Right cardiac atrium (tissue), 5 donors: ENCODE measurements at regions of chr17 and their contacts with region 1.

Region 1: DNA sequence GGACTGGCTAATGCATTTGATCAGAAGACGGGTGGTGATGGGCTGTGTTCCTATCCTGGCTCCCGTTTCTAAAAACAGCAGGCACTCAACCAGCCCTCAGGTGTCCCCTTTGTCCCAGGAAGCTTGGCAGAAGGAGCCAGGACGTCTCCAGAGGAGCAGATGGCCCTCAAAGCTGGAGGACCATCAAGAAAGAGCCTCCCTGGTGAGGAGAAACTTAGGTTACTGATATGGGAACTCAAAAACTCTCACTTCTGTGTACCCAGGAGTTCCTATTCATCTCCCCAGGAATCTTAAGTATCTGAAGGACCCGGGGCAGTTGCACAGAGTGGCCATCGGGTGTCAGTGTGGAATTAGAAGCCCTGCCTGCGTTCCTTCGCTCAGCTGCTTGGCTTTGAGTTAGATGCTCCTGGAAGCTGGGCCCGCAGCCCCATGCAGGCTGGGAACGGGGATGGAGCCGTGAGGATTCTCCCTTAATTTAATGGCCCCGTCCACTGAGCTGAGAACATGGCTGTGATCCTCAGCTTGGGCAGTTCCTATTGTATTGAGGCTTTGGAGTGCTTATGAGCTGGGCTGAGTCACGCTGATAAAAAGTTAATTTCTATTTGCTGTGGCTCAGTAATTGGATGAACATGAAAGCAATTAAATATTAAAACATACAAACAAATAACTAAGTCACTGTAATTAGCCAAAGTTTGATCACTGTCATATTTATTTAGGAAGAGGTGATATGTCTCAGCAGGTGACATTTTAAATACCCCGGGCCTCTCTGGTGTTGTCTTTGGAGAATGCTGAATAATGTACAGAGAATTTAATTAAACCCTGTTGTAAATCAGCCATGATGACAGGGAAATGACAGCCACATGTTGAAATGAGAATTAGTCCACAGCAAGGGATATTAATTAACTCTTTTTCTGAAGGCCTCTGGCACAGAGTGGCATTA is 402.1 kb downstream of the SEC14L1 start:
- DNase-seq: peak; percentile 82 to 90 (median 88)
- ATAC-seq: peak; percentile 92 to 93
- H3K4me3 ChIP-seq: no peak overlapping the region
- H3K27ac ChIP-seq: peak overlapping the region; percentile 92
- H3K4me1 ChIP-seq: peaks cover 4% of the 10 kb centered on the region
- H3K27me3 ChIP-seq: no peaks in the 10 kb centered on the region

Region 2: DNA sequence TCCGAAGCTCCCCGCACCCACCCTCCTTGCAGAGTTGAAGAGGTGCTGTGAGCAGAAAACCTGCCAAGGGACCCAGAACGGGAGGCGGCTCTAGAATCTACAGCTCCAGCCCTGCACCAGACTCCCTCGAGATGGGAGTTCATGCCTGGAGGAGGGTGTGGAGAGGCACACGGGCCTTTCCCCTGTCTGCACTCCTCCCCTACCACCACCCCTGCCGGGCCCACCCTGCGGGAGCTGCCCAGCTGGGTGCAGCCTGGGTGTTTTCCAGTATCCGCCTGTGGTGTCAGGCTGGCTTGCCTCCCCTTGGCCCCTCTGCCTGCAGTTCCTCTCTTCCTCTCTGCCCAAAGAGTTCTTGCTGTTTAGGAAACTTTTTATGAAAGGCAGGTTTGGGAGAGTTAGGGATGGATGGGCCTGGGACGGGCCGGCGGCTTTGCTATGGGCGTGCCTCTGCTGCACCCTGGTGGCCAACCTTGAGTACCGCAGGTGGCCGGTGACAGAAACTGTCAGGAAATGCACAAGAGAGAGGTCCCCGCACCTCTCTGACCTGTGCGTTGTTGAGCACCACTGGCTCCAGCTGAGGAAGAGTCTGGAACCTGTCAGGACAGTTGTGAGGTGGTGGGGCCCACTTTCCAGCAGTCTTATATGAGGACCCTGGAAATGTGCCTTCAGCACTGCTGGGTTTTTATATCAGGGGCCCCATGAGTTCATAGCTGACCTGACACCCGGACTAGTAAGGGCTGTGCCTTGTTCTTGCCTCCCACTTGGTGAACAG is 48.0 kb before region 1 on chr17:
- intact Hi-C with region 1: no loop called
- DNase-seq: peak; percentile 70 to 92 (median 90)
- ATAC-seq: peak; percentile 46 to 62
- H3K4me3 ChIP-seq: no peak overlapping the region
- H3K27ac ChIP-seq: no peak overlapping the region
- H3K4me1 ChIP-seq: peaks cover 5% of the 10 kb centered on the region
- H3K27me3 ChIP-seq: no peaks in the 10 kb centered on the region

Region 3: DNA sequence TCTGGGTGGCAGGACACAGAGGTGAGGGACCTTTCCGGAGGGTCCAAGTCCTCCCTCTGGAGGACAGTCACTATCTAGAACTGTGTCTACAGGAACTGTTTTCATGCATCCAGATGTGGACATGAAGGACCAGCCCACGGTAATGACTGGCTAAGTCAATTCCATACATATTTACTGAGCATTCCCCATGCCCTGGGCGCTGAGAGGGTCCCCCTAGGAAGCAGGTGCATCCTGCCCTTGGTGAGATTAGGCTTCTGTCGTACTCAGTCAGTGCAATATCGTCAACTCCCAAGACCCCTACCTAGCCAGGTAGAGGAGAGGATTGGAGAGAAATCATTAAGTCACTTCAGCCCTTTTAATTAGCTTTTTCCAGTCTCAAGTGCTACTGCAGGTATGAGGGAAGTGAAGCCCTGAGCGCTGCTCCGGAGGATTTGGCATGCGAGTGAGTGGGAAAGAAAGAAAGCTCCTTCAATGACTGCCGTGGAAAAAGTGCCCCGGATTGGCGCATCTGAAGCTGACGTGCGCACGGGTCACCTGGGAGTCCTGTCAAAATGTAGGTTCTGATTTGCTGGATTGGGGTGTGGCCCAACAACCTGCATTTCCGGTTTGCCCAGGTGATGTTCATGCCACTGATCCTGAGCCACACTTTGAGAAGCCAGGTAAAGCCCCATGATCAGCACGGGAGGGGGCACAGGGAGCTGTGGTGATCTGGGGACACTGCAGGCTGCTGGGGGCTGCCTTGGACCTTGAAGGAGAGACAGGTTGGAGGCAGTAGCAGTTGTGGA is 48.3 kb after region 1 on chr17:
- intact Hi-C with region 1: no loop called
- DNase-seq: no peak
- ATAC-seq: no peak
- H3K4me3 ChIP-seq: no peak overlapping the region
- H3K27ac ChIP-seq: no peak overlapping the region
- H3K4me1 ChIP-seq: no peaks in the 10 kb centered on the region
- H3K27me3 ChIP-seq: no peaks in the 10 kb centered on the region

Region 4: GRCh38 chr17:77609553-77610517 is 67.0 kb after region 1 on chr17:
- intact Hi-C with region 1: loop called in 1 of 4 experiments (anchors 10 kb)
- DNase-seq: no peak
- ATAC-seq: no peak
- H3K4me3 ChIP-seq: no peak overlapping the region
- H3K27ac ChIP-seq: no peak overlapping the region
- H3K4me1 ChIP-seq: no peaks in the 10 kb centered on the region
- H3K27me3 ChIP-seq: no peaks in the 10 kb centered on the region

Region 5: DNA sequence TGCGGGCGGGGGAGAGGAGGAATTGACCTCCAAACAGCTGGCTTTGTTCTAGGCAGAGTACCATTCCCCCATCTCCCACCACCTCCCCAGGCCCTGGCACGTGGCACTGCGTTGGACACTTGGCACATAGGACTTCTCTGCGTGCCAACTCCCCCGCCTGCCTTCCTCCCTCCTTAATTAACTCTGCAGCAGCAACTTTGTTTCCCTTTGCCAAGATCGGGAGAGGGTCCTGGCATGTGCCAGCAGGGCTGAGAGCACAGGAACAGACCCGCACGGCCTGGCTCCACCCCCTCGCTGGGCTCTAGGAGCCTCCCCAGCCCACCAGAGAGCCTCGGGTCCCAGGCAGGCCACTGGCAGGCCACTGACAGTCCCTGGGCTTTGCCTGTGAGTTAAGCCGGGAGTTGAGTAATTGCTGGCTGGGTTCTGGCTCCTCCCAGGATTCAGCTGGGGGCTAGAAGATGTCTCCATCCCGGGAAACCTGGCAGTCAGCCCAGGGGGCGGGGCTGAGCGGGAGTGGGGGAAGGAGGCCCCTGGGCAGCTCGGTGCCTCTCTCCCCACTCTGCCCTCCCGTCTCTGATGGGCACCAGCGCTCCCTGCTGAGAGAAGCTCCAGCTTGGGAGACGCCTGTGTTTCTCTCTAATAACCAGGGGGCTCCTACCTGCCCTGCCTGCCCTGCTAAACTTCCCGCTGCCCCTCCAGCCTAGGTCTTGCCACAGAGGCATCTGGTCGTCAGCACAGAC is 191.7 kb after region 1 on chr17:
- intact Hi-C with region 1: loop called in 3 of 4 experiments (anchors 5 to 10 kb)
- DNase-seq: peak; percentile 94 to 98 (median 97)
- ATAC-seq: peak; percentile 76 to 79
- H3K4me3 ChIP-seq: no peak overlapping the region
- H3K27ac ChIP-seq: peak overlapping the region; percentile 82
- H3K4me1 ChIP-seq: peaks cover 8% of the 10 kb centered on the region
- H3K27me3 ChIP-seq: no peaks in the 10 kb centered on the region

Region 6: GRCh38 chr17:77790143-77790829 is 247.5 kb after region 1 on chr17:
- intact Hi-C with region 1: no loop called
- DNase-seq: no peak
- ATAC-seq: no peak
- H3K4me3 ChIP-seq: no peak overlapping the region
- H3K27ac ChIP-seq: no peak overlapping the region
- H3K4me1 ChIP-seq: no peaks in the 10 kb centered on the region
- H3K27me3 ChIP-seq: no peaks in the 10 kb centered on the region

Region 7: DNA sequence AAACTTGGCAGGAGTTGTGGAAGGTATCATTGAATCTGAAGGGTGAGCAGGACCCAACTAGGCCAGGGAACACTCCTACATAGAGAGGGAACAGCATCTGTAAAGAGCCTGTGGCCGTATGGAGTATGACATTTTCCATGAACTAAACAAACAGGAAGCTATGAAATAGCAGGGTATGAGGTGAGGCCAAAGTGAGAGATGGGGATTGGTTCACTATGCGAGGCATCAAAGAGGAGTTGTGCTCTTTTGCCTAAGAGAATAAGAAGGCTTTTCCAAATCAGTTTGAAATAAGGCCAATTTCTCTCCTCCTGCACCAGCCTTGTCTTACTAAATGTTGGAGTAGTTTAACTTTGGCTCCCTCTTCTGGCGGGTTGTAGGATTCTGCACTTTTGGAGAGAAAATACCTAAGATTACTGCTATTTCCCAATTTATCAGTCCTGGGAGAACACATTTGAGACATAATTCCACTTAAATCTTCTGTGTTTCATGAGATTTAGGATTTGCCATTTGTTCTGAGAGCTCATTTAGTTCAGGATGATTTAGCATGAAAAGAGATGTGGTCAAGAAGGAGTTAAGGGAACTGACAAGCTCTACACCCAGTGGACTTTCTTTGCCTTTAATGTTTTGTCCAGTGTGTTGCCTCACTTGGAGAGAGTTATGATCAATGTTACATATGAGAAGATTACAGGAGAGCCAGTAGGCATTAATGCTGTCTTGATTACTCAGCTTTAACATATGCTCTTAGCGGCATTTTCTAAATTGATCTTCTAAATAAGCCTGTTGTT is 471.1 kb after region 1 on chr17:
- intact Hi-C with region 1: loop called (anchors 5 to 10 kb)
- DNase-seq: no peak
- ATAC-seq: peak; percentile 69 to 70
- H3K4me3 ChIP-seq: no peak overlapping the region
- H3K27ac ChIP-seq: no peak overlapping the region
- H3K4me1 ChIP-seq: peaks cover 3% of the 10 kb centered on the region
- H3K27me3 ChIP-seq: no peaks in the 10 kb centered on the region